A673 (cell line): ENCODE measurements at regions of chr1 and their contacts with region 1.

Region 1: GRCh38 chr1:228964178-228965089 is 229.2 kb downstream of the RHOU start:
- DNase-seq: no peak
- H3K4me3 ChIP-seq: no peak overlapping the region
- H3K27ac ChIP-seq: no peak overlapping the region
- H3K4me1 ChIP-seq: no peaks in the 10 kb centered on the region
- H3K27me3 ChIP-seq: no peaks in the 10 kb centered on the region
- CTCF ChIP-seq: no peak

Region 2: DNA sequence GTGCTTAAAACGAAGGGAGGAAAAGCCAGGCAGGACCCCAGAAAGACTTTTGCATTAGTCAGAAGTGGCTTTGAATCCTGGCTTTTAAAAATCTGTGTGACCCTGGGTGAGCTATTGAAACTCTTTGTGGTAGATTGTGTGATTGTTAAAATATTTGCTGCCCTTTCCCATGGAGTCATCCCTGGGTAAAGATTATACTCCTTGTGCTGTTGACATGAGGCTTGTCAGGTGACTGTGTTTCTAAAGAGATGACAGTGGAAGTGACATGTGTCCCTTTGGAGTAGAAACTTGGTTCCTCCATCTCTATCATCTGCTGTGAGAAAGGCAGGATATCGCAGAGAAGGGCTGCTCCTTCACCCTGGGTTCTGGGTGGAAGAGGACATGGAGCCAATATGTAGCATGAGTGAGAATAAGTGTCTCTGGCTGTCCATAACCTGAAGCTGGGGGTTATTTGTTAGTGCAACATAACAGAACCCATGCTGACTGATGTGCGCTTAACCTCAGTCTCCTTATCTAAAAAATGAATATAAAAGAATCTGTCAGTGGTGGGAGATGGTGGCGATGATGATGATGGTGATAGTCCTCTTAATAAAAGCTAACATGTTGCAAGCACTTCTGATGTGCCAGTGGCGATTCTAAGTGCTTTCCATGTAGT is 41.6 kb before region 1 on chr1:
- CTCF ChIA-PET with region 1: interaction called, 11 read pairs
- POLR2A ChIA-PET with region 1: no interaction called
- intact Hi-C with region 1: no loop called
- DNase-seq: no peak
- H3K4me3 ChIP-seq: no peak overlapping the region
- H3K27ac ChIP-seq: no peak overlapping the region
- H3K4me1 ChIP-seq: no peaks in the 10 kb centered on the region
- H3K27me3 ChIP-seq: no peaks in the 10 kb centered on the region
- CTCF ChIP-seq: no peak

Region 3: DNA sequence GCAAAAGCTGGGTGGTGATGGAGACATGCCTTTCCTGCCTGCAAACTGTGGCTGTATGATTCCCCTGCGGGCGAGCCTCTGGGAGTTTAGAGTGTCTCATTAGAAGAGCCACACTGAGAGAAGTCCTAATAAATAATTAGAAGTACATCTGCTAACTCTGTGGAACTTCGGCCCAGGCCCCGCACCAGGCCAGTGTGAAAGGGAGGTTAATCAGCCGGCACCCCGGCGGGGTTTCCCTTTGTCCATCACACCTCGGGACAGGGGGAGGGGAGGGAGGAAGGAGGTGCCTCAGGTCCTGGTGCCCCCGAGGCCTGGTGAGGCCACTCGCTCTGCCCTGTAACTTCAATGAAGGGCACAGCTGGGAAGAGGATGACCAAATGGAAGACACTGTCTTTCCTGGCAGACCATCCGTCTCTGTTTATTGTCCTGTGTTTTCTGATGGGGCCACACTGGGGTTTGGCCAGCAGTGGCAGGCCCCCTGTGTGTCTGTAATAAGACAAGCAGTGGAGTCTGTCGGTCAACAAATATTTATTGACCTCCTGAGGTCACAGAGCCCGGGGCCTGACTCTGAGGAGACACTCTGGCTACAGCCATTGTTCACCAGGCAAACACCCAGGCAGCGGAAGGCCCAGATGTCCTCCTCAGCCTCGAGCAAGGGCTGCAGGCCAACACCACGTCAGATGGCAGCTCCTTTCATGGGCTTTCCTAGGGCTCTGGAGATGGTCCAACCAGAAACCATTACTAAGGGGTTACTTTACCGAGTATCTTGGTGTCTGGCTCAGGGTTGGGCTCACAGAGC is 39.0 kb after region 1 on chr1:
- CTCF ChIA-PET with region 1: no interaction called
- POLR2A ChIA-PET with region 1: no interaction called
- intact Hi-C with region 1: no loop called
- DNase-seq: no peak
- H3K4me3 ChIP-seq: no peak overlapping the region
- H3K27ac ChIP-seq: no peak overlapping the region
- H3K4me1 ChIP-seq: no peaks in the 10 kb centered on the region
- H3K27me3 ChIP-seq: no peaks in the 10 kb centered on the region
- CTCF ChIP-seq: no peak